ENCODE measurements at regions of chr3 and their contacts with region 1.

Region 1: DNA sequence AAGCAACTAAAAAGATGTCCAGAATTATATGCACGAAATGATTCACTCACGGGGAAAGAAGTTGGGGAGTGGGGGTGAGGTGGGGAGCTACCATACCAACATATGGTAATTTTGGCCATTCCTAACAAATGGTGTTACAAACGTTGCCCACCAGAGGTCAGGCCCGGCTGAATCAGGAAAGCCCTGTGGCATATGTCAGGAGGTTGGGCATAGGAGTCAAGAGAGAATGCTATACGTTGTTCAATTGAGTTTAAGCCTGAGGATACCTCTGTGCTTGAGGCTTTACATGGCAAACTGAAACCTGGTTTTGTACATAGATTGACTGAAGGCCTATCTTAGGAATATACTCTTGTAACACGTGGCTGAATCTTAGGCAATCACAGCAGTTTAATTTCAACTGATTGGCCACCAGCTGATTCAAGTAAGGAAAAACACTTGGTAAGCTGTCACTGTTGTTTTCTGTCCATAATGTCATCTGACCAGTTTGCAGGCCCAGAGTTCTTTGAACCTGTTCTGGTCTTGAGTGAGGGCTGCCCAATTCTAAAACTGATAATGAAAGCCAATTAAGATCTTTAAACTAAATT is 23.4 kb upstream of the SLC2A2 start:
- DNase-seq: peak; percentile 51 to 69 (median 67)
- ATAC-seq: peak; percentile 61 to 79 (median 68)
- H3K4me3 ChIP-seq: no peak overlapping the region
- H3K27ac ChIP-seq: no peak overlapping the region
- H3K4me1 ChIP-seq: peaks cover 0 to 18% (median 2%) of the 10 kb centered on the region in 4 donors
- H3K27me3 ChIP-seq: no peaks in the 10 kb centered on the region
- CTCF ChIP-seq: peak; percentile 69 to 77 (median 73)
- POLR2A ChIP-seq: no peak

Region 2: GRCh38 chr3:171162986-171163723 is 113.2 kb after region 1 on chr3:
- intact Hi-C with region 1: loop called in 1 of 2 experiments (anchors 10 kb)
- DNase-seq: no peak
- ATAC-seq: no peak
- H3K4me3 ChIP-seq: no peak overlapping the region
- H3K27ac ChIP-seq: no peak overlapping the region
- H3K4me1 ChIP-seq: no peaks in the 10 kb centered on the region
- H3K27me3 ChIP-seq: no peaks in the 10 kb centered on the region
- CTCF ChIP-seq: peak; percentile 34 to 52 (median 40)
- POLR2A ChIP-seq: no peak

Region 3: GRCh38 chr3:171566803-171567422 is 517.0 kb after region 1 on chr3:
- intact Hi-C with region 1: loop called in 1 of 2 experiments (anchors 5 kb)
- DNase-seq: no peak
- ATAC-seq: peak; percentile 75 to 85 (median 78)
- H3K4me3 ChIP-seq: no peak overlapping the region
- H3K27ac ChIP-seq: no peak overlapping the region
- H3K4me1 ChIP-seq: no peaks in the 10 kb centered on the region
- H3K27me3 ChIP-seq: no peaks in the 10 kb centered on the region
- CTCF ChIP-seq: peak; percentile 79 to 87 (median 82)
- POLR2A ChIP-seq: no peak

Region 4: DNA sequence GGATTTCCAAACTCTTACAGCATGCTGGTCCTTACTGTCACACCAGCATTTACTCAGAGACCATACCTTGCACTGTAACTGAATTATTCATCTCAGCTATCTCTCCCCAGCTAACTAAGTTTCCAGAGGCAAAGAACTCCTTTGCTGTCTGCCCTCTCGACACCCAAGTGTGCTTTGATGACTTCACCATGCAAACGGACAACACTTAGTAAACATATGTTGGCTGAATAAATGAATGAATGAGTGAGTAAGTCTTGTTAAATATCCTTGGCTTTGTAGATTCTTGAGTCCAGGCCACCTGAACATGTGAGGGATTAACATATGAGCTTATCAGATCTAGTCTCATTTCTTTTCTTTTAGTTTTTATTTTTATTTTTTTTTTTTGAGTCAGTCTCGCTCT is 622.2 kb after region 1 on chr3:
- intact Hi-C with region 1: no loop called
- DNase-seq: no peak
- ATAC-seq: peak in 3 of 4 donors; percentile 42 to 55 (median 46)
- H3K4me3 ChIP-seq: no peak overlapping the region
- H3K27ac ChIP-seq: peak overlapping the region in 1 of 3 donors; percentile 44
- H3K4me1 ChIP-seq: peaks cover 0 to 30% (median 8%) of the 10 kb centered on the region in 4 donors
- H3K27me3 ChIP-seq: no peaks in the 10 kb centered on the region
- CTCF ChIP-seq: no peak
- POLR2A ChIP-seq: no peak